Activated B cell treated with CpG ODN at 0.5 μM for 24 hours (primary cell): ENCODE measurements at regions of chr10 and their contacts with region 1.

Region 1: GRCh38 chr10:114043532-114044246 is at the start of gene ADRB1:
- DNase-seq: no peak
- ATAC-seq: peak; percentile 20
- H3K4me3 Mint-ChIP-seq: peak within 1 kb of the TSS; percentile 75
- H3K27ac Mint-ChIP-seq: no peak within 1 kb of the TSS
- H3K4me1 Mint-ChIP-seq: peaks cover 21% of the 10 kb centered on the region
- H3K27me3 Mint-ChIP-seq: peaks cover 56% of the 10 kb centered on the region
- CTCF ChIP-seq: no peak
- total RNA-seq, gene ADRB1: not detected in 2 replicates

Region 2: GRCh38 chr10:113735921-113736320 is 307.8 kb before region 1 on chr10:
- CTCF ChIA-PET with region 1: no interaction called
- POLR2A ChIA-PET with region 1: no interaction called
- intact Hi-C with region 1: no loop called
- DNase-seq: no peak
- ATAC-seq: no peak
- H3K4me3 Mint-ChIP-seq: no peak overlapping the region
- H3K27ac Mint-ChIP-seq: no peak overlapping the region
- H3K4me1 Mint-ChIP-seq: no peaks in the 10 kb centered on the region
- H3K27me3 Mint-ChIP-seq: no peaks in the 10 kb centered on the region
- CTCF ChIP-seq: no peak

Region 3: GRCh38 chr10:114024876-114025610 is 18.6 kb before region 1 on chr10:
- CTCF ChIA-PET with region 1: no interaction called
- POLR2A ChIA-PET with region 1: interaction called, 4 read pairs
- intact Hi-C with region 1: loop called (anchors 2 kb)
- DNase-seq: peak; percentile 25
- ATAC-seq: peak; percentile 80
- H3K4me3 Mint-ChIP-seq: peak overlapping the region; percentile 71
- H3K27ac Mint-ChIP-seq: peak overlapping the region; percentile 82
- H3K4me1 Mint-ChIP-seq: peaks cover 33% of the 10 kb centered on the region
- H3K27me3 Mint-ChIP-seq: peaks cover 5% of the 10 kb centered on the region
- CTCF ChIP-seq: no peak

Region 4: DNA sequence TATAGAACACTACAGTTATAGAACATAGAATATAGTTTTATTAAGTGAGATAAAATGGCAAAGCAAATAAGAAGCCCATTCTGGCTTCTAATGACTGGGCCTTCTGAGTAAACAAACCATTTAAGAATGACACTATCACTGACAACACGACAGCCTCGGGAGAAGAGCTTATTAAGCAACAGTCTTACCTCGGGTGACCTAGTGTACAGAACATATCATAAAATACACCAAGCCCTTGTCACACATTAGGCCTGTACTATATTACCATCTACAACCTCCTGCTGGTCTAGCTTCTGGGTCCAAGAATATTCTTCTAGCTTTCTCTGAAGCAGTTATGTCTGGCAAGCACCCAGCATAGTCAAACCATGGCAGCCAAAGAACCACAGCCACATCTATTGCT is 98.3 kb after region 1 on chr10:
- CTCF ChIA-PET with region 1: no interaction called
- POLR2A ChIA-PET with region 1: no interaction called
- intact Hi-C with region 1: no loop called
- DNase-seq: no peak
- ATAC-seq: no peak
- H3K4me3 Mint-ChIP-seq: no peak overlapping the region
- H3K27ac Mint-ChIP-seq: no peak overlapping the region
- H3K4me1 Mint-ChIP-seq: no peaks in the 10 kb centered on the region
- H3K27me3 Mint-ChIP-seq: no peaks in the 10 kb centered on the region
- CTCF ChIP-seq: no peak